ENCODE measurements at regions of chr17 and their contacts with region 1.

Region 1: GRCh38 chr17:63827002-63827771 is at the starts of genes FTSJ3 and PSMC5:
- DNase-seq: peak; percentile 82 to 97 (median 88)
- ATAC-seq: peak; percentile 94
- H3K4me3 ChIP-seq: peak within 1 kb of the TSS; percentile 92
- H3K27ac ChIP-seq: peak within 1 kb of the TSS; percentile 100
- H3K4me1 ChIP-seq: peaks cover 0 to 16% of the 10 kb centered on the region in 2 experiments; a peak in 3 of 5 replicates
- H3K27me3 ChIP-seq: no peaks in the 10 kb centered on the region
- CTCF ChIP-seq: peak; percentile 62 to 71 (median 68)
- EP300 ChIP-seq: no peak
- POLR2A ChIP-seq: peak; percentile 95
- RAD21 ChIP-seq: peak; percentile 25 to 32; a peak in 1 of 4 replicates
- polyA plus RNA-seq, gene FTSJ3: 18.0 to 49.3 TPM
- polyA plus RNA-seq, gene PSMC5: 159 to 393 TPM

Region 2: GRCh38 chr17:63445979-63446691 is 381.1 kb before region 1 on chr17 and contains the start of gene CYB561:
- CTCF ChIA-PET with region 1: no interaction called
- POLR2A ChIA-PET with region 1: no interaction called
- in situ Hi-C with region 1: loop called (anchors 25 kb)
- intact Hi-C with region 1: no loop called
- DNase-seq: peak; percentile 84 to 94 (median 92)
- ATAC-seq: peak; percentile 91
- H3K4me3 ChIP-seq: peak within 1 kb of the TSS; percentile 42
- H3K27ac ChIP-seq: peak within 1 kb of the TSS; percentile 94
- H3K4me1 ChIP-seq: peaks cover 42 to 60% of the 10 kb centered on the region in 2 experiments
- H3K27me3 ChIP-seq: no peaks in the 10 kb centered on the region
- CTCF ChIP-seq: peak; percentile 50 to 78 (median 56); a peak in 5 of 6 replicates
- EP300 ChIP-seq: no peak
- POLR2A ChIP-seq: no peak
- RAD21 ChIP-seq: peak in 1 of 2 experiments; percentile 28; a peak in 1 of 4 replicates
- polyA plus RNA-seq, gene CYB561: 4.0 to 4.9 TPM

Region 3: GRCh38 chr17:63809970-63810369 is 17.2 kb before region 1 on chr17:
- CTCF ChIA-PET with region 1: no interaction called
- POLR2A ChIA-PET with region 1: interaction called, 10 read pairs
- in situ Hi-C with region 1: no loop called
- intact Hi-C with region 1: no loop called
- DNase-seq: no peak
- ATAC-seq: no peak
- H3K4me3 ChIP-seq: no peak overlapping the region
- H3K27ac ChIP-seq: no peak overlapping the region
- H3K4me1 ChIP-seq: no peaks in the 10 kb centered on the region
- H3K27me3 ChIP-seq: no peaks in the 10 kb centered on the region
- CTCF ChIP-seq: no peak
- EP300 ChIP-seq: no peak
- POLR2A ChIP-seq: no peak
- RAD21 ChIP-seq: no peak

Region 4: GRCh38 chr17:63842540-63843386 is 15.6 kb after region 1 on chr17 and contains the start of gene SMARCD2:
- CTCF ChIA-PET with region 1: no interaction called
- POLR2A ChIA-PET with region 1: interaction called, 66 read pairs
- in situ Hi-C with region 1: no loop called
- intact Hi-C with region 1: loop called (anchors 1 kb)
- DNase-seq: peak; percentile 94 to 99 (median 96)
- ATAC-seq: peak; percentile 90
- H3K4me3 ChIP-seq: peak within 1 kb of the TSS; percentile 95
- H3K27ac ChIP-seq: peak within 1 kb of the TSS; percentile 93
- H3K4me1 ChIP-seq: peaks cover 23 to 45% of the 10 kb centered on the region in 2 experiments
- H3K27me3 ChIP-seq: no peaks in the 10 kb centered on the region
- CTCF ChIP-seq: no peak
- EP300 ChIP-seq: peak; percentile 72
- POLR2A ChIP-seq: peak; percentile 89
- RAD21 ChIP-seq: peak in 1 of 2 experiments; percentile 18; a peak in 1 of 4 replicates
- polyA plus RNA-seq, gene SMARCD2: 1.7 to 5.7 TPM